WTC11 (cell line): ENCODE measurements at regions of chr2 and their contacts with region 1.

Region 1: GRCh38 chr2:58553937-58554336 is 312.8 kb upstream of the FANCL start:
- DNase-seq: peak; percentile 47
- ATAC-seq: peak; percentile 85
- H3K4me3 Mint-ChIP-seq: no peak overlapping the region
- H3K27ac Mint-ChIP-seq: peak overlapping the region; percentile 78
- H3K4me1 Mint-ChIP-seq: peaks cover 38% of the 10 kb centered on the region
- H3K27me3 Mint-ChIP-seq: no peaks in the 10 kb centered on the region
- CTCF ChIP-seq: no peak

Region 2: DNA sequence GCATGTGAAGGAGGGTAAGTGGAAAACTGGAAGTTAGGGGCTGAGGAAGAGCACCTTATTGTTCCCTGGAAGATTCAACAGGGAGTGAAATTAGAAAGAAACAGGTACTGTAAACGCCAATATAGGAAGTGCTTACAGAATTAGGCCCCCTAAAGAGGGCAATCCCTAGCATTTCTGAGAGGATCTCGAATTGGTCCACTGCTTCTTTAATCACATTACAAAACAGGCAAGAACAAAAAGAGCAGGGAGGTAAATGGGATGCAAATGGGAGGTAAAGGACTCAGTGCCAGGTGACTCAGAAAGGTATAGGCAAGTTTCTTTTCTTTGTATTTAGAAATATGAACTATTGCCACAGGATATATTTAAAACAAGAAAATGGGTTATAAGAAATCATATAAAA is 196.4 kb before region 1 on chr2:
- CTCF ChIA-PET with region 1: interaction called, 10 read pairs
- POLR2A ChIA-PET with region 1: no interaction called
- DNase-seq: no peak
- ATAC-seq: peak; percentile 90
- H3K4me3 Mint-ChIP-seq: no peak overlapping the region
- H3K27ac Mint-ChIP-seq: peak overlapping the region; percentile 54
- H3K4me1 Mint-ChIP-seq: peaks cover 28% of the 10 kb centered on the region
- H3K27me3 Mint-ChIP-seq: no peaks in the 10 kb centered on the region
- CTCF ChIP-seq: no peak

Region 3: GRCh38 chr2:58535182-58535581 is 18.8 kb before region 1 on chr2:
- CTCF ChIA-PET with region 1: interaction called, 14 read pairs
- POLR2A ChIA-PET with region 1: no interaction called
- DNase-seq: peak; percentile 32
- ATAC-seq: peak; percentile 83
- H3K4me3 Mint-ChIP-seq: peak overlapping the region; percentile 51
- H3K27ac Mint-ChIP-seq: peak overlapping the region; percentile 86
- H3K4me1 Mint-ChIP-seq: peaks cover 79% of the 10 kb centered on the region
- H3K27me3 Mint-ChIP-seq: no peaks in the 10 kb centered on the region; the same call in 1 of the 2 replicates
- CTCF ChIP-seq: no peak